Heart right ventricle (tissue), 16 donors: ENCODE measurements at regions of chr17 and their contacts with region 1.

Region 1: DNA sequence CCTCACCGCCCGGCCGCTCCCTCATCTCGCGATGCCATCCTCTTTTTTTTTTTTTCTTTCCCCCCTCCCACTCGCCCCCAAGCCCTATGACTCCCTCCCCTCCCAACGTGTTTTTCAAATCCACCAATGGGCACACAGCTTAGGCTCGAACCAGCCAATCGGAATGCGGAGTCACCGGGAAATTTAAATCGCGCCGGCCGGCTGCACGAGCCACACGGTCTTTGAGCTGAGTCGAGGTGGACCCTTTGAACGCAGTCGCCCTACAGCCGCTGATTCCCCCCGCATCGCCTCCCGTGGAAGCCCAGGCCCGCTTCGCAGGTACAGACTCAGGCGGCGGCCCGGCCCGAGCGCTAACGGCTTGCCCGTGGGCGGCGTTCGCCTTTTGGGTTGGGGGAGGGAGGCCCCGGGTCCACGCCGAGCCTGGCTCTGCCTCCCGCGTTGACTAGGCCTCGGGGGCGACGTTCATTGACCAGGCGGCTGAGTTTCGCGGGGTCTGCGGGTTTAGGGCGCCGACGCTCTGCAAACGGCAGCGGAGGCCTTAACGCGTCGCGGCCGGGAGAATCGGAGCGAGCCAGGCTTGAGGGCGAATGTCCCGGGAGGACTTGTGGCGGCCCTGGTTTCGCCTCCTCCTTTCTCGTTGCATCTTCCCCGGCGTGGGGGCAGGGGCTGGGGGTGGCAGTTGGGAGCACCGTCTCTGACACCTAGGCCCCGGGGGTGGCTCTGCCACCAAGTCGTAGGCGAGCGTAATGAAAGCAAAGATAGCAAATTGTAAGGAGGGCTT is at the start of gene KPNA2:
- DNase-seq: peak; percentile 92 to 96
- ATAC-seq: peak; percentile 96 to 98 (median 97)
- H3K4me3 ChIP-seq: peak within 1 kb of the TSS; percentile 82 to 100 (median 98)
- H3K27ac ChIP-seq: peak within 1 kb of the TSS; percentile 50 to 91 (median 86)
- H3K4me1 ChIP-seq: peaks cover 0 to 27% (median 20%) of the 10 kb centered on the region in 9 donors
- H3K27me3 ChIP-seq: no peaks in the 10 kb centered on the region
- CTCF ChIP-seq: no peak
- total RNA-seq, gene KPNA2: 12.6 to 33.3 (median 18.8) TPM

Region 2: GRCh38 chr17:68019675-68020408 is 15.9 kb before region 1 on chr17:
- intact Hi-C with region 1: loop called in 1 of 10 experiments (anchors 2 kb)
- DNase-seq: peak; percentile 97
- ATAC-seq: peak; percentile 95 to 98 (median 96)
- H3K4me3 ChIP-seq: peak overlapping the region; percentile 39 to 78 (median 61)
- H3K27ac ChIP-seq: peak overlapping the region; percentile 80 to 93 (median 84)
- H3K4me1 ChIP-seq: peaks cover 0 to 9% (median 6%) of the 10 kb centered on the region in 9 donors
- H3K27me3 ChIP-seq: no peaks in the 10 kb centered on the region
- CTCF ChIP-seq: peak; percentile 31 to 61 (median 47)

Region 3: GRCh38 chr17:68141050-68141449 is 105.3 kb after region 1 on chr17:
- intact Hi-C with region 1: no loop called
- DNase-seq: no peak
- ATAC-seq: no peak
- H3K4me3 ChIP-seq: no peak overlapping the region
- H3K27ac ChIP-seq: no peak overlapping the region
- H3K4me1 ChIP-seq: no peaks in the 10 kb centered on the region
- H3K27me3 ChIP-seq: no peaks in the 10 kb centered on the region
- CTCF ChIP-seq: no peak